GM10248 (cell line): ENCODE measurements at regions of chr17 and their contacts with region 1.

Region 1: GRCh38 chr17:32370426-32370825 is 20.5 kb downstream of the ZNF207 start:
- DNase-seq: no peak
- CTCF ChIP-seq: no peak

Region 2: DNA sequence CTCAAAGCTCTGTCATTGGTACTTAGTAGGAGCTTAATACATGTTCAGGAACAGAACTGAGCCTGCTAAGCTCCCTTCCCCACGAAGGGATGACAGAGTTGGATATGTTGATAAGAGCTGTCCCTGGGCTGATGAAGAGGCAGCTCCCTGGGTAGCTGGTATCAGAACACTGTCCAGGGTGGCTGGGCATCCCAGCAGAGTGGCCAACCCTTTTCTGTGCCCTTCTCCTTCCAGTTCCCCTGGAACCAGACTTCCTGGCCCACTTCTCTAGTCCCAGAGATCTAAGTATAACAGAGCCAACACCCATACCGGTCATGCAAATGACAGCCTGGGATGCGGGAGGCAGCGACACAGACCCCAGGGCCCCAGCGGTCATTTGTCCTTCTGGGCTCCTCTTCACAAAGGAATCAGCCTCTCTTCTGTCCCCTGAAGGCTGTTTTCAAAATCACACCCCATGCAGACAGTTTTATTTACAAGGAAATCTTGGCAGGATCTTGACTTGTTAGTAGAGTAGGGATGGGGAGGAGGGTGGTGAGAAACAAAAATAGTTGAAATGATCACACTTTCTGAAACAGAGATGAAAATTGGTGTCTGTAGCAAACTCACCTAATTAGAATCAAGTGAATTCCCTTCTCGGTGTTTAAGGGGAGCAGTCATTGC is 106.2 kb before region 1 on chr17:
- CTCF ChIA-PET with region 1: no interaction called
- POLR2A ChIA-PET with region 1: no interaction called
- DNase-seq: no peak
- CTCF ChIP-seq: no peak

Region 3: DNA sequence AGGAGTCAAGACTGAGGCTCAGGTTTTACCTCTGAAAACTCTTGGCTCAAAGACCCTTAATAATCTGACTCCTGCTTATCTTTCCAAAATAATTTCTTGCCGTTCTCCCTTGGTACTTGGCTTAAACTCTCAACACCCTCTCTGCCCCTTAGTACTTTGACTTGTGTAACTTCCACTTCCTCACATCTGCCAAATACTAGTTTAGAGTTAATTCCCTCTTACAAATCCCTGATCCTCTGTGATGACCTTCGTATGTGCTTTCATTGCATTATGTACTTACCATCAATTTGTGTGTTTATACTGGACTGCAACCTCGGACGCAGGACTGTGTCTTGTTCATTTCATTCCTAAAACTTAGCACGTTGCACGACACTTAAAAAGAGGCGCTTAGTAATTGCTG is 14.7 kb after region 1 on chr17:
- CTCF ChIA-PET with region 1: interaction called, 3 read pairs
- POLR2A ChIA-PET with region 1: interaction called, 12 read pairs
- DNase-seq: no peak
- CTCF ChIP-seq: no peak